ENCODE measurements at regions of chr21 and their contacts with region 1.

Region 1: DNA sequence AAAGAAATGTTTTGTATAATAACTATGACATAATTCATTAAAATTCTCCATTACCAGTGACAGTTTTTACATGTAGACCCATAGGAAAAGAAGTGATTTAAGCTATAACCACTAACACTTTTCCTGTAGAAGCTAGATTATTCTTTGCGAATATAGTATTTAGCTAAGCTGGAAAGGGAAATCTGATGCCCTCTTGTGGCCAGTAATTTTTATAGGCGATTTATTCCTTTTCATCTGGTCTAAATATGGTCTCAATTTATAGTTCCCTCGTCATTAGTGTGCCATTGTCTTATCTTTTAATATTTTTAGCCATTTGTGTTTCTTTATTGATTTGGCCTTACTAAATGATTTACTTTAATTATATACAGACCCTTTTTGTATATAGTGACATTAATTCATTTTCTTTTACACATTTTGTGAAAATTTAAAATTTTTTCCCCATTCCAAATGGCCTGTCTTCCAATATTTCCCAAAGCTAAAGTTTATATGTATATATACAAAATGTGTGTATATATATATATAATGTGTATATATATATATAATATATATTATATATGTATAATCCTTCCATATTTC is 26.7 kb downstream of the BTG3 start:
- DNase-seq: peak; percentile 5 to 48
- ATAC-seq: peak in 1 of 2 experiments; percentile 54; a peak in 2 of 6 replicates
- H3K4me3 ChIP-seq: no peak overlapping the region
- H3K27ac ChIP-seq: no peak overlapping the region
- H3K4me1 ChIP-seq: no peaks in the 10 kb centered on the region
- CTCF ChIP-seq: peak; percentile 56
- EP300 ChIP-seq: no peak
- POLR2A ChIP-seq: no peak
- RAD21 ChIP-seq: peak; percentile 60 to 61

Region 2: DNA sequence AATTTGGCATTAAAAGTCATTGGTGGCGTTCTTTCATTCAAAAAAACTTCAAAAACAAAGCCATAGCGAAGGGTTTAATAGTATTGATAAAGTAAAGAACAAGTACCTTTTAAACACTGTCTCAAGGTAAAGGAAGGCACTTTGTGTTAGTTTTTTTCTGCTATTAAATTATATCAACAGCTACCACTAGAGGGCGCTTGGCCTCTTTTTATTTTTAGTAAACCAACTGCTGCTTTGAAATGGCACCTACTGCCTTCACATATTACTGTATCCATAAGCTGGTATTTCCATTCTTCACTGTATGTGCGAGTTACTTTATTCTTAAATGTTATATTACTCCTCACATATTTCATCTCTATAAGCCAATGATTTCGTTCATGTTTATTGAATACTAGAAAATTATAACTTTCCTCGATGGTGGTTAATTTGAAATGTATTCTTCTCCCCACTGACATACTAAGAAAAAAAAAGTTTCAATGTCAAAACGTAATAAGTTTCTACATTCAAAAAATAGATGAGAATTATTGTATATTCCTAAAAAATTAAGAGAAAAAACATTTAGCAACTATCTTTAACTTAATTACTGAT is 198.8 kb before region 1 on chr21:
- CTCF ChIA-PET with region 1: interaction called, 26 read pairs
- POLR2A ChIA-PET with region 1: no interaction called
- DNase-seq: peak; percentile 25 to 51
- ATAC-seq: peak; percentile 54 to 73; a peak in 4 of 6 replicates
- H3K4me3 ChIP-seq: no peak overlapping the region
- H3K27ac ChIP-seq: no peak overlapping the region
- H3K4me1 ChIP-seq: no peaks in the 10 kb centered on the region
- CTCF ChIP-seq: peak; percentile 70
- EP300 ChIP-seq: no peak
- POLR2A ChIP-seq: no peak
- RAD21 ChIP-seq: peak; percentile 80 to 84

Region 3: GRCh38 chr21:17393413-17393812 is 192.6 kb before region 1 on chr21:
- CTCF ChIA-PET with region 1: interaction called, 26 read pairs
- POLR2A ChIA-PET with region 1: no interaction called
- DNase-seq: no peak
- ATAC-seq: no peak
- H3K4me3 ChIP-seq: no peak overlapping the region
- H3K27ac ChIP-seq: no peak overlapping the region
- H3K4me1 ChIP-seq: no peaks in the 10 kb centered on the region
- CTCF ChIP-seq: no peak
- EP300 ChIP-seq: no peak
- POLR2A ChIP-seq: no peak
- RAD21 ChIP-seq: no peak

Region 4: GRCh38 chr21:17631195-17631594 is 45.2 kb after region 1 on chr21:
- CTCF ChIA-PET with region 1: no interaction called
- POLR2A ChIA-PET with region 1: no interaction called
- DNase-seq: no peak
- ATAC-seq: no peak
- H3K4me3 ChIP-seq: no peak overlapping the region
- H3K27ac ChIP-seq: no peak overlapping the region
- H3K4me1 ChIP-seq: no peaks in the 10 kb centered on the region
- CTCF ChIP-seq: no peak
- EP300 ChIP-seq: no peak
- POLR2A ChIP-seq: no peak
- RAD21 ChIP-seq: no peak

Measured in A549 (cell line).